Activated CD4-positive, alpha-beta T cell treated with anti-CD3 and anti-CD28 coated beads, Interleukin-2, amount 10 ng/mL, durations not matched to agents 24 days and 14 days (primary cell): ENCODE measurements at regions of chr16 and their contacts with region 1.

Region 1: DNA sequence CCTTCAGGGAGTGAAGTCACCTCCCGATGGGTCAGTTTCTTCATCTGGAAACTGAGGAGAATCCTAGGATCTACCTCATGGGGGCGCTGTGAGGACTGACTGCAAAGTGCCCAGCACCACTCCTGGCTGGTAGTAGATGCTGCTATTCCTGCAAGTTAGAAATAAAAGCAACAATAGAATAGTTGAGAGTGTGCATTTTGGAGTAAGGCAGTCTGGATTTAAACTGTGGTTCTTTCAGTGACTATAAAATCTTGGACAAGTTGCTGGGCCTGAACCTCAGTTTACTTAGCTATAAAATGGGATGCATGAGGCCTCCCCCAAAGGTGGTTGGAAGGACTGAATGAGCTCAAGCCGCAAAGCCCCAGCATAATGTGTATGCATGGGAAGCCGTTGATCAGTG is 70.6 kb downstream of the CYB5B start:
- DNase-seq: peak; percentile 79
- H3K4me3 Mint-ChIP-seq: no peak overlapping the region
- H3K27ac Mint-ChIP-seq: no peak overlapping the region
- H3K4me1 Mint-ChIP-seq: peaks cover 3% of the 10 kb centered on the region
- H3K27me3 Mint-ChIP-seq: no peaks in the 10 kb centered on the region

Region 2: GRCh38 chr16:69535123-69536050 is 40.4 kb after region 1 on chr16:
- intact Hi-C with region 1: loop called (anchors 5 kb)
- DNase-seq: no peak
- H3K4me3 Mint-ChIP-seq: no peak overlapping the region
- H3K27ac Mint-ChIP-seq: no peak overlapping the region
- H3K4me1 Mint-ChIP-seq: peaks cover 18% of the 10 kb centered on the region
- H3K27me3 Mint-ChIP-seq: no peaks in the 10 kb centered on the region